HCT116 (cell line): ENCODE measurements at regions of chr6 and their contacts with region 1.

Region 1: GRCh38 chr6:87066449-87067333 is 28.2 kb downstream of the CGA start:
- DNase-seq: peak; percentile 57
- ATAC-seq: no peak
- H3K4me3 ChIP-seq: no peak overlapping the region
- H3K27ac ChIP-seq: no peak overlapping the region
- H3K4me1 ChIP-seq: no peaks in the 10 kb centered on the region
- H3K27me3 ChIP-seq: peaks cover 20% of the 10 kb centered on the region
- CTCF ChIP-seq: peak; percentile 38 to 78 (median 56); a peak in 4 of 6 replicates
- POLR2A ChIP-seq: no peak
- RAD21 ChIP-seq: peak; percentile 80

Region 2: DNA sequence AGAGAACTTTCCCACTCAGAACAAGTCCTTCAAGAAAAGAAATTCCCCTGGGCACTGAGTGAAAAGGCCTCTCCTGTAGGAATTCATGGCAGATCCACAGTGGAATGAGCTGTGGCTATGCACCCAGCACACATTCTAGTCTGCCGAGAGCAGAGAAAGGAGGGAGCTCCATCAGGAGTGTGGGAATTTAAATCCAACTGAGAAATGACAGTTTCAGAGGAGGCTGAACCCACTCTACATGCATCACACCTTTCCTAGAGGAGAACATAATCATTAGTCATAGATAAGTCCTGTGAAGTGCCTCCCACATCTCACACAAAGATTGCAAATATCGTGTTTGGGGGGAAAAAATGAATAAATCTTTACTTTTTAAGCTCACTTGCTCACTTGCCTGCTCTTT is 659.6 kb before region 1 on chr6:
- CTCF ChIA-PET with region 1: no interaction called
- POLR2A ChIA-PET with region 1: no interaction called
- RAD21 ChIA-PET with region 1: no interaction called
- intact Hi-C with region 1: no loop called
- DNase-seq: no peak
- ATAC-seq: no peak
- H3K4me3 ChIP-seq: no peak overlapping the region
- H3K27ac ChIP-seq: no peak overlapping the region
- H3K4me1 ChIP-seq: no peaks in the 10 kb centered on the region
- H3K27me3 ChIP-seq: no peaks in the 10 kb centered on the region
- CTCF ChIP-seq: no peak
- POLR2A ChIP-seq: no peak
- RAD21 ChIP-seq: no peak

Region 3: DNA sequence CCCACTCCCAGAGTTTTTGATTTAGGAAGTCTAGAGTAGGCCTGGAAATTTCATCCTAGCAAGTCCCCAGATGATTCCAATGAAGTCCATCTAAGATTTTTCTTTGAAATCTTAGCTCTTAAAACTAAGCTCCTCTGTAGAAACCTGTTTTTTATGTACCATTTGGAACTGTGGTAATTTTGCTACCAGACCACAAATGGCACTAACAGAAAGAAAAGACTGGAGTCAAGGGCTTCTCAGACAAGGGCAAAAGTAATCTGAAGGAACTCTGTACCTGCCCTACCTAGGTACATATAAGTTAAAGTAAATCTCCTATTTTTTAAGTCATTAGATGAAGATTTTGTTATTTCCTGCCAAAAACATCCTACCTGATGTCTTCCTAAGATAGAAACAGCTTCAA is 284.4 kb before region 1 on chr6:
- CTCF ChIA-PET with region 1: no interaction called
- POLR2A ChIA-PET with region 1: no interaction called
- RAD21 ChIA-PET with region 1: no interaction called
- intact Hi-C with region 1: no loop called
- DNase-seq: no peak
- ATAC-seq: no peak
- H3K4me3 ChIP-seq: no peak overlapping the region
- H3K27ac ChIP-seq: no peak overlapping the region
- H3K4me1 ChIP-seq: no peaks in the 10 kb centered on the region
- H3K27me3 ChIP-seq: peaks cover 12% of the 10 kb centered on the region; the same call in 1 of the 2 replicates
- CTCF ChIP-seq: no peak
- POLR2A ChIP-seq: no peak
- RAD21 ChIP-seq: no peak

Region 4: DNA sequence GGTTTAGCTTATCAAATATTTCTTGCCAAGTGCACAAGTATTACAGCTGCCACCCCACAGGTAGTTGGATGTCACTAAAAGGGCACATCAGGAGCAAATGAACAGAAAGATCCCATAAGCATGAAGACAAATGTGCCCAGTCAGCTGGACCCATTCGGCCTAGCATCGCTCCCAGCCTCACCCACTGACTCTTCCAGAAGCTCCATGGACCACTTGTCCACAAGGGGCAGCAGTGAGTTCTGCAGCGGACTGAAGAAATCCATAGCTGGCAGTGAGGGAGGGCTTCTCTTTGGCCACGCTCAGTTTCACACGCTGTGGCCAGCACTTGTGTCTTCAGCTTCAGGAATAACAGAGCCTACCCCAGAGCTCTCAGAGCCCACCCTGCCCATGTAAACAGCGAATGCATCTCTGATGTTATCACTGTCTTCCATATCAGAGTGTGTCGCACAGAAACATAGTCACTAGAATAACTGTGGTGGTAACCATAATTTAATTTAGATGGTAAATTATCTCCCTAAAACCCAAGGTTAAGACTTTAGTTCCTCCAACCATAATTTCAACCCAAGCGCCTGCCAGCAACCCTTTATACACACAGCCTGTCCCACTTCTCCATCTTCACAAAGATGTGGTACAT is 12.4 kb after region 1 on chr6:
- CTCF ChIA-PET with region 1: interaction called, 22 read pairs
- POLR2A ChIA-PET with region 1: no interaction called
- RAD21 ChIA-PET with region 1: no interaction called
- intact Hi-C with region 1: no loop called
- DNase-seq: peak; percentile 79
- ATAC-seq: peak; percentile 100
- H3K4me3 ChIP-seq: no peak overlapping the region
- H3K27ac ChIP-seq: no peak overlapping the region
- H3K4me1 ChIP-seq: no peaks in the 10 kb centered on the region
- H3K27me3 ChIP-seq: peaks cover 14% of the 10 kb centered on the region; the same call in 1 of the 2 replicates
- CTCF ChIP-seq: peak; percentile 40 to 99 (median 94); a peak in 5 of 6 replicates
- POLR2A ChIP-seq: no peak
- RAD21 ChIP-seq: peak; percentile 46; the same call in 1 of the 2 replicates

Region 5: DNA sequence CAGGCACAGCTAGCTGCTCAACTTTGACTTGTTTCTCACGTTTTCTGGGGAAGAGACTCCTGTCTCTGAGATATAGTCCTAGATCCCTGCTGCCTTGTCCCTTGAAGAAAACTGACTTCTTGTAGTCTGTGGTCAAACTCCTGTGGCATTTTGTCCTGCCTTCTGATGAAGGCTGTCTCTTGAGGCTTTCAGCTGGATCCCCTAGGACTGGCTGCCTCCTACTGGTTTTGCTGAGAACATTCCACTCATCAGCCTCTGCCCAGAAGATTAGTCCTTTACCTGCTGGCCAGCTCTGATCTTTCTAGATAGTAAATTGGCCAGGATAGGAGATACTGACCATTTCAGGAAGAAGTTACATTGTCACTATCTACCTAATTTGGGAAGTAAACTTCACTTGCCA is 1171.4 kb after region 1 on chr6:
- CTCF ChIA-PET with region 1: no interaction called
- POLR2A ChIA-PET with region 1: no interaction called
- RAD21 ChIA-PET with region 1: no interaction called
- intact Hi-C with region 1: loop called (anchors 10 kb)
- DNase-seq: peak; percentile 13
- ATAC-seq: peak; percentile 67
- H3K4me3 ChIP-seq: no peak overlapping the region
- H3K27ac ChIP-seq: no peak overlapping the region
- H3K4me1 ChIP-seq: no peaks in the 10 kb centered on the region
- H3K27me3 ChIP-seq: no peaks in the 10 kb centered on the region
- CTCF ChIP-seq: peak; percentile 28 to 44 (median 40); a peak in 5 of 6 replicates
- POLR2A ChIP-seq: no peak
- RAD21 ChIP-seq: peak; percentile 62

Region 6: DNA sequence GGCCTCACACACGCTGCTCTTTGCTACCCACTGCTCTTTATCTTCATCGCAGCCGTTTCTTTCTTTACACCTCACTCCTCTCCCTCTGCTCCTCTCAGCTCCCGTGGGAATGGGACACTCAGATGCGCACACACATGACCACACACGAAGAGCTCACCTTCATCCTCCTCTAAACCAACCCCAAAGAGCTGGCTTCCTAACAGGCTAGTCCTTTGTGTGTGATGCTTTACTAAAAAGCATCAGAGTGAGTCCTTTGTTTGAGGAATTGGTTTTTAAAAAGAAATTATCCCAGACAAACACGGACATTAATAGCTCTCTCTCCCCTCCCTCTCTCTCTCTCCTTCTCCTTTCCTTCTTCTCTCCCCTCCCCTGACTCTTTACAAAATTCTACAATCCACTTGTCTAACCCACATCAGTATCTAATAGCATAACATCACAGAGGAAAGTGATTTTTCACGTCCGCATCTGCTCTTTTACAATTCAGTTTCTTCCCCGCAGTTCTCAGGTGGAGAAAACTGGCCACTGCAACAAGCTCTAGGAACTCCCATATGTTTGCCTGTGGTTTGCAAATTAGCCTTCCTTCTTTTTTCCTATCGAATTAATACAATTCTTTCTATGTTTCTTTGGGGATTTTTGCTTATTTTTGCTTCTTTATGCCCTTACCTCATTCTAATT is 1406.3 kb after region 1 on chr6:
- CTCF ChIA-PET with region 1: no interaction called
- POLR2A ChIA-PET with region 1: no interaction called
- RAD21 ChIA-PET with region 1: no interaction called
- intact Hi-C with region 1: loop called (anchors 5 kb)
- DNase-seq: no peak
- ATAC-seq: no peak
- H3K4me3 ChIP-seq: no peak overlapping the region
- H3K27ac ChIP-seq: no peak overlapping the region
- H3K4me1 ChIP-seq: no peaks in the 10 kb centered on the region
- H3K27me3 ChIP-seq: peaks cover 5% of the 10 kb centered on the region; the same call in 1 of the 2 replicates
- CTCF ChIP-seq: no peak
- POLR2A ChIP-seq: no peak
- RAD21 ChIP-seq: no peak

Region 7: DNA sequence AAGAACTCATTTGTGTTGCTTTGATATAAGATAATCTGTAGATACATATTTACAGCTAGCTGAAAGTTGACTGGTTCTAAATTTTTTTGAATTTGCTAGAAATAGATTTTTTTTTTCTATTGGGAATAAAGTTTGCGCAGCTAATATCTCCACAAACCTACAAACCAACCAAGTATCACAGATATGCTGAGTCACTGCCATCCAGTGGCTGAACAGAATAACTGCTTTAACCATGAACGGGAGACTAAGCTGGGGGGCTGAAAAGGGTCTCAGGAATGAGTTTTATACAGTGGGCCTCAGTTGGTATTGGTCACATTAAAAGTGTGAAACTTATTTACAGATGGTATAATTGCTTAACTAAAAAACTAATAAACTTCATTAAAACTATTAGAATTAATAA is 1426.1 kb after region 1 on chr6:
- CTCF ChIA-PET with region 1: interaction called, 12 read pairs
- POLR2A ChIA-PET with region 1: no interaction called
- RAD21 ChIA-PET with region 1: no interaction called
- intact Hi-C with region 1: loop called (anchors 10 kb)
- DNase-seq: peak; percentile 22
- ATAC-seq: peak; percentile 78
- H3K4me3 ChIP-seq: no peak overlapping the region
- H3K27ac ChIP-seq: no peak overlapping the region
- H3K4me1 ChIP-seq: no peaks in the 10 kb centered on the region
- H3K27me3 ChIP-seq: no peaks in the 10 kb centered on the region
- CTCF ChIP-seq: peak; percentile 43 to 64 (median 52); a peak in 5 of 6 replicates
- POLR2A ChIP-seq: no peak
- RAD21 ChIP-seq: peak; percentile 64

Region 8: GRCh38 chr6:88870717-88871330 is 1804.1 kb after region 1 on chr6:
- CTCF ChIA-PET with region 1: interaction called, 6 read pairs
- POLR2A ChIA-PET with region 1: no interaction called
- RAD21 ChIA-PET with region 1: no interaction called
- intact Hi-C with region 1: loop called (anchors 1 kb)
- DNase-seq: peak; percentile 29
- ATAC-seq: peak; percentile 54; the same call in 1 of the 2 replicates
- H3K4me3 ChIP-seq: no peak overlapping the region
- H3K27ac ChIP-seq: no peak overlapping the region
- H3K4me1 ChIP-seq: peaks cover 0 to 8% of the 10 kb centered on the region in 2 experiments; a peak in 2 of 4 replicates
- H3K27me3 ChIP-seq: no peaks in the 10 kb centered on the region
- CTCF ChIP-seq: peak; percentile 33 to 68 (median 43); a peak in 3 of 6 replicates
- POLR2A ChIP-seq: no peak
- RAD21 ChIP-seq: peak; percentile 74